Endothelial cell of umbilical vein (primary cell): ENCODE measurements at regions of chr4 and their contacts with region 1.

Region 1: DNA sequence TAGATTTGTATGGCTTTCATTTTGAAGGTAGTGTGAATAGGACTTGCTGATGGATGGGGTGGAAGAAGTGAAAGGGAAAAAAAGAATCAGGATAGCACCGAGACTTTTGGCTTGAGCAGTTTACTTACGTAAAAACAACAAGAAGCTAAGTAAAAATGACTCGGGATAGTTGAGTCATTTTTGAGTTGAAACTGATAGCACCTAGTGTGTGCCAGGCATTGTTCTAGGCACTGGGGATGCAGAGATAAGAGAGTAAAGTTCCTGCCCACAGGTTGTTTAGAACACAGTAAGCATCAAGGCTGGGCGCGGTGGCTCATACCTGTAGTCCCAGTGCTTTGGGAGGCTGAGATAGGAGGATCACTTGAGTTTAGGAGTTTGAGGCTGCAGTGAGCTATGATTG is 34.7 kb downstream of the ADD1 start:
- DNase-seq: peak; percentile 24
- H3K4me3 ChIP-seq: no peak overlapping the region
- H3K27ac ChIP-seq: no peak overlapping the region
- H3K4me1 ChIP-seq: peaks cover 18% of the 10 kb centered on the region
- H3K27me3 ChIP-seq: no peaks in the 10 kb centered on the region
- CTCF ChIP-seq: no peak
- POLR2A ChIP-seq: no peak

Region 2: DNA sequence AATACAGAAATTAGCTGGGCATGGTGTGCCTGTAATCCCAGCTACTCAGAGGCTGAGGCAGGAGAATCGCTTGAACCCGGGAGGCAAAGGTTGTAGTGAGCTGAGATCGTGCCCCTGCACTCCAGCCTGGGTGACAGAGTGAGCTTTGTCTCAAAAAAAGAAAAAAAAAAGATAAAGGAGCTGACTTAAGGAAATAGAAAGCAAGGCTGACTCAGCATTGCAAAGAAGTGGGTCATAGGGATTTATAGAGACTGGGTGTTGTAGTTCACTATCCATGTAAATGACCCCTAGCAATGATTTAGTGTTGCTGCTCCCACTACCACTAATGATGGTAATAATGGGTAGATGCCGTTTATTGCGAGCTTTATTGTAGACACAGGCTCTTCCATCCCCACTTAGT is 12.9 kb after region 1 on chr4:
- CTCF ChIA-PET with region 1: interaction called, 11 read pairs
- POLR2A ChIA-PET with region 1: no interaction called
- dilution Hi-C with region 1: no loop called
- intact Hi-C with region 1: no loop called
- DNase-seq: no peak
- H3K4me3 ChIP-seq: no peak overlapping the region
- H3K27ac ChIP-seq: no peak overlapping the region
- H3K4me1 ChIP-seq: no peaks in the 10 kb centered on the region
- H3K27me3 ChIP-seq: no peaks in the 10 kb centered on the region
- CTCF ChIP-seq: no peak
- POLR2A ChIP-seq: no peak